Caco-2 (cell line): ENCODE measurements at regions of chr10 and their contacts with region 1.

Region 1: GRCh38 chr10:4849555-4850242 is 23.7 kb downstream of the AKR1E2 start:
- DNase-seq: peak; percentile 93 to 96
- H3K4me3 ChIP-seq: no peak overlapping the region
- H3K4me3 Mint-ChIP-seq: peak overlapping the region; percentile 20
- H3K27ac Mint-ChIP-seq: peak overlapping the region; percentile 69
- H3K4me1 ChIP-seq: peaks cover 11% of the 10 kb centered on the region; the same call in 1 of the 2 replicates
- H3K4me1 Mint-ChIP-seq: peaks cover 20% of the 10 kb centered on the region
- H3K27me3 ChIP-seq: no peaks in the 10 kb centered on the region
- H3K27me3 Mint-ChIP-seq: no peaks in the 10 kb centered on the region
- CTCF ChIP-seq: peak; percentile 99 to 100

Region 2: DNA sequence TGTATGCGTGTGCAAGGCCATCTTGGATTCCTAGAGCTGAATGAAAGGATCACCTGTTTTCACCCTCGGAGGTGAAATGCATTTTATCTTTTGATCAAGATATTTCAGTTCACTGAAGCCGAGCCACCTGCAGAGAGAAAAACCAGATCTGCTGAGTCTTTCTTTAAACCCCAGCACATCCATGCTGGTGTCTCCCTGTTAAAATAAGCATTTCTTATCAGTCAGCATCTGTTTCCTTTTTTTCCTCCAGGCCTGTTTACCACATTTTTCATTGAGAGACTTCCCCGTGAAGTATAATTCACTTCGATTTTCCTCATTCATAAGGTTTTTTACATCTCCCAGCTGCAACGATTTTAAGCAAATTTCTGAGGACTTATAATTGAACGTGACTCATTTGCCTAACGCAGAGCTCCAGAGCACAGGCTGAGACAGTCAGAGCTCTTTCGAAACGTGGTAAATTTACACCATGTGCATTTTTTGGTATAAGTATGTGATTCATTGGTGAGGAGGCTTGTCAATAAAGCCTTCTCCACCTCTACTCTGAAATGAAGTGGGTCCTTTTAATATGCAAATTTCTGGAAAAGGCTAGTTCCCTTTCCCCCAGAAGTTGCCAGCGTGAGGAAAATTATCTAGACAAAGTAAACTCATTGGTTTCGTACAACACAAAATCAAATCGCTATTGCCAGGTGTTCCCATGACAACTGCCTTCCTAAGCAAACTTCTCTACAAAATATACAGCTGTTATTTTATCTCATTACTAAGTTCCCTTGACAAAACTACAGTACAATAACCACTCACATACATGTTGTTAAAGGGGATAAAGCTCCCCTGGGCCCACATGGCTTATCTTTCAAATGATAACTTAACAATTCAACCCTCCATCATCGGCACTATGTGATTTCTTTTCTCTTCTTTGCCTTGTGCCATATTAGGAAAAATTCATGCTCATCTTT is 398.5 kb before region 1 on chr10:
- CTCF ChIA-PET with region 1: no interaction called
- POLR2A ChIA-PET with region 1: no interaction called
- intact Hi-C with region 1: no loop called
- DNase-seq: no peak
- H3K4me3 ChIP-seq: no peak overlapping the region
- H3K4me3 Mint-ChIP-seq: no peak overlapping the region
- H3K27ac Mint-ChIP-seq: no peak overlapping the region
- H3K4me1 ChIP-seq: peaks cover 26% of the 10 kb centered on the region
- H3K4me1 Mint-ChIP-seq: peaks cover 11% of the 10 kb centered on the region
- H3K27me3 ChIP-seq: no peaks in the 10 kb centered on the region
- H3K27me3 Mint-ChIP-seq: no peaks in the 10 kb centered on the region
- CTCF ChIP-seq: no peak

Region 3: GRCh38 chr10:4546500-4546899 is 303.2 kb before region 1 on chr10:
- CTCF ChIA-PET with region 1: no interaction called
- POLR2A ChIA-PET with region 1: no interaction called
- intact Hi-C with region 1: no loop called
- DNase-seq: no peak
- H3K4me3 ChIP-seq: no peak overlapping the region
- H3K4me3 Mint-ChIP-seq: no peak overlapping the region
- H3K27ac Mint-ChIP-seq: no peak overlapping the region
- H3K4me1 ChIP-seq: no peaks in the 10 kb centered on the region; the same call in 1 of the 2 replicates
- H3K4me1 Mint-ChIP-seq: peaks cover 6% of the 10 kb centered on the region
- H3K27me3 ChIP-seq: no peaks in the 10 kb centered on the region
- H3K27me3 Mint-ChIP-seq: peaks cover 16% of the 10 kb centered on the region
- CTCF ChIP-seq: no peak

Region 4: GRCh38 chr10:4790045-4790444 is 59.7 kb before region 1 on chr10:
- CTCF ChIA-PET with region 1: no interaction called
- POLR2A ChIA-PET with region 1: no interaction called
- intact Hi-C with region 1: no loop called
- DNase-seq: no peak
- H3K4me3 ChIP-seq: no peak overlapping the region
- H3K4me3 Mint-ChIP-seq: no peak overlapping the region
- H3K27ac Mint-ChIP-seq: no peak overlapping the region
- H3K4me1 ChIP-seq: peaks cover 5% of the 10 kb centered on the region; the same call in 1 of the 2 replicates
- H3K4me1 Mint-ChIP-seq: no peaks in the 10 kb centered on the region
- H3K27me3 ChIP-seq: no peaks in the 10 kb centered on the region
- H3K27me3 Mint-ChIP-seq: peaks cover 7% of the 10 kb centered on the region
- CTCF ChIP-seq: no peak

Region 5: GRCh38 chr10:4813023-4813422 is 36.7 kb before region 1 on chr10:
- CTCF ChIA-PET with region 1: interaction called, 17 read pairs
- POLR2A ChIA-PET with region 1: interaction called, 6 read pairs
- intact Hi-C with region 1: loop called (anchors 2 kb)
- DNase-seq: no peak
- H3K4me3 ChIP-seq: no peak overlapping the region
- H3K4me3 Mint-ChIP-seq: no peak overlapping the region
- H3K27ac Mint-ChIP-seq: no peak overlapping the region
- H3K4me1 ChIP-seq: peaks cover 11% of the 10 kb centered on the region; the same call in 1 of the 2 replicates
- H3K4me1 Mint-ChIP-seq: no peaks in the 10 kb centered on the region
- H3K27me3 ChIP-seq: no peaks in the 10 kb centered on the region
- H3K27me3 Mint-ChIP-seq: no peaks in the 10 kb centered on the region
- CTCF ChIP-seq: no peak

Region 6: GRCh38 chr10:4825851-4826665 is 23.6 kb before region 1 on chr10 and contains the start of gene AKR1E2:
- CTCF ChIA-PET with region 1: interaction called, 13 read pairs
- POLR2A ChIA-PET with region 1: interaction called, 4 read pairs
- intact Hi-C with region 1: no loop called
- DNase-seq: peak; percentile 100
- H3K4me3 ChIP-seq: peak within 1 kb of the TSS; percentile 56
- H3K4me3 Mint-ChIP-seq: peak within 1 kb of the TSS; percentile 98
- H3K27ac Mint-ChIP-seq: peak within 1 kb of the TSS; percentile 94
- H3K4me1 ChIP-seq: peaks cover 19% of the 10 kb centered on the region
- H3K4me1 Mint-ChIP-seq: peaks cover 12% of the 10 kb centered on the region
- H3K27me3 ChIP-seq: no peaks in the 10 kb centered on the region
- H3K27me3 Mint-ChIP-seq: peaks cover 5% of the 10 kb centered on the region
- CTCF ChIP-seq: no peak
- total RNA-seq, gene AKR1E2: 68.3 and 68.5 TPM in 2 replicates

Region 7: GRCh38 chr10:5071411-5072198 is 221.9 kb after region 1 on chr10:
- CTCF ChIA-PET with region 1: interaction called, 4 read pairs
- POLR2A ChIA-PET with region 1: no interaction called
- intact Hi-C with region 1: loop called (anchors 2 kb)
- DNase-seq: peak; percentile 95 to 96
- H3K4me3 ChIP-seq: peak overlapping the region; percentile 2; the same call in 1 of the 2 replicates
- H3K4me3 Mint-ChIP-seq: peak overlapping the region; percentile 56
- H3K27ac Mint-ChIP-seq: peak overlapping the region; percentile 85
- H3K4me1 ChIP-seq: peaks cover 64% of the 10 kb centered on the region
- H3K4me1 Mint-ChIP-seq: peaks cover 52% of the 10 kb centered on the region
- H3K27me3 ChIP-seq: no peaks in the 10 kb centered on the region
- H3K27me3 Mint-ChIP-seq: no peaks in the 10 kb centered on the region
- CTCF ChIP-seq: no peak

Region 8: DNA sequence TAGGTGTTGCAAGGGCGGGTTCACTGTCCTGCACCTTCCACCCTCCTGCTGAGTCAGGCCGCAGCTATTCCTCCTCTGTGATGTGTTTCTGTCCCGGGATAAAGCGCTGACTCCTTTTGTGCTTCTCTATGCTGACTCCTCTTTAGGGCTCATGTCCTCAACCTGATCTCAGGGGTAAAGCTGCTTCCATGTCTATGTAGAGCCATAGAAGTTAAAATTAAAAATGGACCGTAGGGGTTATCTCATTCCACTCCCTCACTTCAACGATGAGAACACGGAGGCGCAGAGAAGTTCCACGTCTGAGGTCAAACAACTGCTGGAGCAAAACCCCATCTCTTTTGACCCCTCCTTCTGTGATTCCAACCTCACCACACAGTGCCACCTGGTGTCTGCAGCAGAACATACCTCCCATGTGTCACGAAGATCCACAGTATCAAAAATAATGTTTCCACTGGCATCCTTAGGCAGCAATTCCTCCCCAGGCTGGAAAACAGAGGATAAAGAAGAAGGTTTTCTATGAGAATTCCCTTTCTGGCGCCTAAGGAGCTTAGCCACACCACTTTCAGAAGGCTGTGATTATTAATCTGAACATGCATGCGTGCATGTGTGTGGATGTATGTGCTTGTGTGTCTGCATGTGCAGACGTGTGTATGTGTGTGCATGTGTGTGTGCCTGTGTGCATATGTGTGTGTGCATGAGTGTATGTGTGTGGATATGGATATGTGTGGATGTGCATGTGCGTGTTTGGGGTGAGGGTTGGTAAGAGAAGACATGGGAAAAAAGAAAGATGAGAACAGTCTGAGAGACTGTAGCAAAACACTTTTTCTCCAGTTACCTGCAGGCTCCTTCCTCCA is 433.8 kb after region 1 on chr10:
- CTCF ChIA-PET with region 1: interaction called, 13 read pairs
- POLR2A ChIA-PET with region 1: no interaction called
- intact Hi-C with region 1: loop called (anchors 1 kb)
- DNase-seq: peak; percentile 81 to 83
- H3K4me3 ChIP-seq: no peak overlapping the region
- H3K4me3 Mint-ChIP-seq: peak overlapping the region; percentile 50
- H3K27ac Mint-ChIP-seq: peak overlapping the region; percentile 22
- H3K4me1 ChIP-seq: no peaks in the 10 kb centered on the region; the same call in 1 of the 2 replicates
- H3K4me1 Mint-ChIP-seq: peaks cover 7% of the 10 kb centered on the region
- H3K27me3 ChIP-seq: no peaks in the 10 kb centered on the region
- H3K27me3 Mint-ChIP-seq: peaks cover 7% of the 10 kb centered on the region
- CTCF ChIP-seq: peak; percentile 88 to 92

Region 9: GRCh38 chr10:5434017-5434753 is 584.5 kb after region 1 on chr10:
- CTCF ChIA-PET with region 1: interaction called, 27 read pairs
- POLR2A ChIA-PET with region 1: no interaction called
- intact Hi-C with region 1: loop called (anchors 2 kb)
- DNase-seq: peak in 1 of 2 experiments; percentile 66
- H3K4me3 ChIP-seq: no peak overlapping the region
- H3K4me3 Mint-ChIP-seq: no peak overlapping the region
- H3K27ac Mint-ChIP-seq: no peak overlapping the region
- H3K4me1 ChIP-seq: no peaks in the 10 kb centered on the region
- H3K4me1 Mint-ChIP-seq: peaks cover 17% of the 10 kb centered on the region
- H3K27me3 ChIP-seq: no peaks in the 10 kb centered on the region
- H3K27me3 Mint-ChIP-seq: no peaks in the 10 kb centered on the region
- CTCF ChIP-seq: peak; percentile 81 to 86